ENCODE measurements at regions of chr12 and their contacts with region 1.

Region 1: DNA sequence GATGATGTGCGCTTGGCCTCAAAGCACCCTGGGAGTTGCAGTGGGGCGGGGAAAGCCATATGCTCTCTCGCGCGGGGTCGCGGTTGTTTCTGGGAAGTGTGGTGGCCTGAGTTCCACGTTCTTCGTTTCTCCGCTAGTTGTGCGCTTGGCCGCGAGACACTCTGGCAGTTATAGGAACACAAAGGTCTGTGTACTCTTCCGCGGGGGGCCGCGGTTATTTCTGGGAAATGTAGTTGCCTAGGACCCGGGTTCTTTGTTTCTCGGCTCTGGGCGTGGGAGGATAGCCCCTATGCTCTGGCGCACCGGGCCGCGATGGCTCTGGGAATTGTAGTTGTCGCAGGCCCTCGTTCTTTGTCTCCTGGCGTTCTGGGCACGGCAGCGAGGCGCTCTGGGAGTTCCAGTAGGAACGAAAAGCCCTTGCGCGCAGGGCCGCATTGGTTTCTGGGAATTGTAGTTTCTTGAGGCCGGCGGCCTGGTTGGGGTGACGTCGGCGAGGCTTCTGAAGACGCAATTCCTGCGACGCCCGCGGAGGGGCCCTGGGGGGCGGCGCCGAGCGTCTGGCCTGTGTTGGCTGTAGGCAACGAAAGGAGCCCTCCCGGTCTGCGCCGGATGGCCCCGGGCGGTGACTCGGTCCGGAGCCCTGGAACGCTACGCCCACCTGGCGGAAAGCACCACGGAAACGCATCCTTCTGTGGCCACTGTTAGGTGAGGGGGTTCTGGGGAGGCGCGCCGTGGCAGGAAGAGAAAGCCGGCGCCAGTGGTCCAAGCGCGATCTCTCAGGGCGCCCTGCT is at the start of gene ZNF140:
- DNase-seq: peak; percentile 93 to 97 (median 96)
- H3K4me3 ChIP-seq: peak within 1 kb of the TSS; percentile 53
- H3K27ac ChIP-seq: peak within 1 kb of the TSS; percentile 89 to 98
- H3K4me1 ChIP-seq: no peaks in the 10 kb centered on the region
- H3K27me3 ChIP-seq: no peaks in the 10 kb centered on the region
- CTCF ChIP-seq: peak in 2 of 3 donors; percentile 50 to 57
- EP300 ChIP-seq: peak; percentile 19
- POLR2A ChIP-seq: peak; percentile 74
- total RNA-seq, gene ZNF140: 17.8 to 26.3 (median 19.9) TPM

Region 2: DNA sequence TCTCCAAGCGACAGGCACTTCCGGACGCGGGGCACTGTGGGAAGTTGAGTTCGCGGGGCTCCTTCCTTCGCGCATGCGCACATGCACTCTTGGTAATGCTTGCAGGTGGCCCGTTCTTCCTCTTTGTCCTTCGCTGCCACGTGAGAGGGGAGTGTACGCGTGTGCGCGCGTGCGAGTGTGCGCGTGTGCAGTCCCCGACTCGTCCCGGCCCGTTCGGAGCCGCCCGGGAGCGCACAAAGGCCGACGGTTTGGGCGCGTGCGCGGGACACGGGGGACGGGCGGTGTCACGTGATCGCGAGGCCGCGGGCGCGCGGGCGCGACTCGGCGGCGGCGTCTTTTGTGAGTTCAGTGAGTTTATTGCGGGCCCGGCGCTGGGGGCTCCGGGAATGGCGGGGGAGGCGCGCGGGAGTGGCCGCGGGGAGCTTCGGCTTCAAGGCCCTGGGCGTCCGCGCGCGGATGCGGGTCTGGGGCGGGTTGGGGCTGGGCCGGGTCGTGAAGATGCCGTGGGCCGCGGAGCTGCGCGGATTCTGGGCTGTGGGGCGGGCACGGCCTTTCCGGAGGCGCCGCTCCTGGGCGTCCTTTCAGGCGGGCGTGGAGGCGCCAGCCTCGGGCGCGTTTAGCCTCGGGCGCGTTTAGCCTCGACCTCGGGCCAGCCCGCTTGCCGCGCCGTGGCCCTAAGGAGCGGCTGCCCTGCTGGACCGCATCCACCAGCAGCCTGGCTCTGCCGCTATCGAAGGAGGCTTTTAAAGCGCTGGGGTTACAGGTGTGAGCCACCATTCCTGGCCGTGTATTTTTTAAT is 43.2 kb before region 1 on chr12 and contains the start of gene ZNF84:
- intact Hi-C with region 1: loop called in 1 of 4 experiments (anchors 2 kb)
- DNase-seq: peak; percentile 95 to 97 (median 96)
- H3K4me3 ChIP-seq: peak within 1 kb of the TSS; percentile 78
- H3K27ac ChIP-seq: peak within 1 kb of the TSS; percentile 93 to 97
- H3K4me1 ChIP-seq: peaks cover 3% of the 10 kb centered on the region
- H3K27me3 ChIP-seq: no peaks in the 10 kb centered on the region
- CTCF ChIP-seq: no peak
- EP300 ChIP-seq: no peak
- POLR2A ChIP-seq: peak; percentile 47
- total RNA-seq, gene ZNF84: 19.1 to 41.4 (median 32.8) TPM

Region 3: DNA sequence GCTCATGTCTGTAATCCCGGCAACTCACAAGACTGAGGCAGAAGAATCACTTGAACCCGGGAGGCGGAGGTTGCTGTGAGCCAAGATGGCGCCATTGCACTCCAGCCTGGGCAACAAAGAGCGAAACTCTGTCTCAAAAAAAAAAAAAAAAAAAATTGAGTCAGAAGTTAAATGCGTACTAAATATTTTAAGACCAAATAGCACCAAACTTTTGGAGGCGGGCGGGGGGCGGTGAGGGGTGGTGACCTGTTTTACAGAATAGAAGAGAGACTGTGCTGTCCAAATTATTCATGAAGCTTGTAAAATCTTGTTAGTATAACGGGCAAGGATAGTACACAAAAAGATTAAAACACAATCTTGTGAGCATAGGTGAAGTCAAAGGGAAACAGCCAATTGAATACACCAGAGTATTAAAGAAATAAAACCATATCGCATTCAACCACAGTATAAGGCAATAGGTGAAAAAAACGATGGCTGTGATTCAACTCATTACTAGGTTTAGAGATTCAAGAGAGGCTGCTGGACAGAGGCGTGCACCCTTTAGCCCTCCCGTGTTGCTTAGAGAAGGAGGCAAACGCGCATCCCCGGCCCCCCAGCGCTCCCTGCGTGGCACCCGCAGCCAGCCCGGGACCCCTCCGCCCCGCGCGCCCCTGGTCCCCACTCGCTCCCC is 48.9 kb after region 1 on chr12:
- intact Hi-C with region 1: loop called in 1 of 4 experiments (anchors 5 kb)
- DNase-seq: peak in 2 of 5 donors; percentile 24 to 35
- H3K4me3 ChIP-seq: peak overlapping the region; percentile 80
- H3K27ac ChIP-seq: peak overlapping the region; percentile 95
- H3K4me1 ChIP-seq: no peaks in the 10 kb centered on the region
- H3K27me3 ChIP-seq: no peaks in the 10 kb centered on the region
- CTCF ChIP-seq: no peak
- EP300 ChIP-seq: no peak
- POLR2A ChIP-seq: no peak

Measured in ovary (tissue), 10 donors.